Activated naive CD4-positive, alpha-beta T cell treated with anti-CD3 and anti-CD28 coated beads for 36 hours (primary cell): ENCODE measurements at regions of chr5 and their contacts with region 1.

Region 1: DNA sequence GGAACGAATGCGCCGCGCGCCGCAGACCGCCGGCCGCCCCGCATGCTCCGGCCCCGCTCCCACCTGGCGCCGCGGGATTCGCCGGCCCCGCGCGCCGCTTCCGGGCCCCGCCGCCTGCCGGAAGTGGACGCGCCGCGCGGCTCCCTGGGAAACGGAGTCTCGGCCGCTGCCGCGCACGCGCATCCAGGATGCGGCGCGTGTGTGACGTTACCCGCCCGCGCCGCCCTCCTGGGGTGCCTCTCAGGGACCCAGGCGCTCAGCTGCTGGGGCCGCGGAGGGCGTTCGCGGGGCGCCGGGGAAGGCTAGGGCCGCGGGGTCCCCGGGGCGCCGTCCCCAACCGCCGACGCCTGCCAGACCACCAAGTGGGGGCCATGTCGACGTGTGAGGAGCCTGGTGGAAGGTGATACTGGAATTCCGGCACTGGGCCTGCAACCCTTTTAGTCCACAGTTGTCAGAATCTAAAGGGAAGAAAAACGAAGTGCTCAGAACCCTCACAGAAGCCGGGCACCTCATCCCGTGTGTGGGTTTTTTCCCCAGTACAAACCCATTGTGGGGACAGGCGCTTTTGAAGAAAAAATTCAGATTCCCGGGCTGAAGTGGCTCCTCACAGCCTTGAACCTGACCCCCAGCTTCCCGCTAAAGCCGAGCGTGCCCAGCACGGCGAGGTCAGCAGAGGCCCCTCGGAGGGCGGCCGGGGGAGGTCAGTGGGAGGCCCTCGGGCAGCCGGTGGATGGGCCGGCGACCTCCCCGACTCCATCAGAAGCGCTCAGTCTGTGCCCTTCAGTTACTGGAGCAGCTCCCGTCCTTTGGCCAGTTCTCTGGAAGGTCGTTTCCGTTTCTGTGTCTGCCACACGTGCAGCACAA is at the start of gene CLPTM1L:
- DNase-seq: peak; percentile 87
- H3K4me3 Mint-ChIP-seq: peak within 1 kb of the TSS; percentile 79
- H3K27ac Mint-ChIP-seq: peak within 1 kb of the TSS; percentile 70
- H3K4me1 Mint-ChIP-seq: peaks cover 31% of the 10 kb centered on the region
- H3K27me3 Mint-ChIP-seq: no peaks in the 10 kb centered on the region
- total RNA-seq, gene CLPTM1L: 48.0 to 48.5 TPM

Region 2: GRCh38 chr5:1167728-1168709 is 177.2 kb before region 1 on chr5:
- CTCF ChIA-PET with region 1: interaction called, 3 read pairs
- intact Hi-C with region 1: loop called (anchors 1 kb)
- DNase-seq: peak; percentile 75
- H3K4me3 Mint-ChIP-seq: peak overlapping the region; percentile 37
- H3K27ac Mint-ChIP-seq: no peak overlapping the region
- H3K4me1 Mint-ChIP-seq: peaks cover 4% of the 10 kb centered on the region
- H3K27me3 Mint-ChIP-seq: peaks cover 8% of the 10 kb centered on the region

Region 3: GRCh38 chr5:1255081-1255561 is 90.1 kb before region 1 on chr5:
- CTCF ChIA-PET with region 1: no interaction called
- intact Hi-C with region 1: loop called (anchors 1 kb)
- DNase-seq: peak; percentile 57
- H3K4me3 Mint-ChIP-seq: peak overlapping the region; percentile 0
- H3K27ac Mint-ChIP-seq: peak overlapping the region; percentile 32
- H3K4me1 Mint-ChIP-seq: peaks cover 22% of the 10 kb centered on the region
- H3K27me3 Mint-ChIP-seq: no peaks in the 10 kb centered on the region

Region 4: DNA sequence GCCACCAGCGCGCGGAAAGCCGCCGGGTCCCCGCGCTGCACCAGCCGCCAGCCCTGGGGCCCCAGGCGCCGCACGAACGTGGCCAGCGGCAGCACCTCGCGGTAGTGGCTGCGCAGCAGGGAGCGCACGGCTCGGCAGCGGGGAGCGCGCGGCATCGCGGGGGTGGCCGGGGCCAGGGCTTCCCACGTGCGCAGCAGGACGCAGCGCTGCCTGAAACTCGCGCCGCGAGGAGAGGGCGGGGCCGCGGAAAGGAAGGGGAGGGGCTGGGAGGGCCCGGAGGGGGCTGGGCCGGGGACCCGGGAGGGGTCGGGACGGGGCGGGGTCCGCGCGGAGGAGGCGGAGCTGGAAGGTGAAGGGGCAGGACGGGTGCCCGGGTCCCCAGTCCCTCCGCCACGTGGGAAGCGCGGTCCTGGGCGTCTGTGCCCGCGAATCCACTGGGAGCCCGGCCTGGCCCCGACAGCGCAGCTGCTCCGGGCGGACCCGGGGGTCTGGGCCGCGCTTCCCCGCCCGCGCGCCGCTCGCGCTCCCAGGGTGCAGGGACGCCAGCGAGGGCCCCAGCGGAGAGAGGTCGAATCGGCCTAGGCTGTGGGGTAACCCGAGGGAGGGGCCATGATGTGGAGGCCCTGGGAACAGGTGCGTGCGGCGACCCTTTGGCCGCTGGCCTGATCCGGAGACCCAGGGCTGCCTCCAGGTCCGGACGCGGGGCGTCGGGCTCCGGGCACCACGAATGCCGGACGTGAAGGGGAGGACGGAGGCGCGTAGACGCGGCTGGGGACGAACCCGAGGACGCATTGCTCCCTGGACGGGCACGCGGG is 50.2 kb before region 1 on chr5 and contains the start of gene TERT:
- CTCF ChIA-PET with region 1: no interaction called
- intact Hi-C with region 1: loop called (anchors 1 kb)
- DNase-seq: peak; percentile 81
- H3K4me3 Mint-ChIP-seq: peak within 1 kb of the TSS; percentile 58
- H3K27ac Mint-ChIP-seq: no peak within 1 kb of the TSS
- H3K4me1 Mint-ChIP-seq: peaks cover 18% of the 10 kb centered on the region
- H3K27me3 Mint-ChIP-seq: no peaks in the 10 kb centered on the region
- total RNA-seq, gene TERT: 10.1 to 13.1 TPM

Region 5: DNA sequence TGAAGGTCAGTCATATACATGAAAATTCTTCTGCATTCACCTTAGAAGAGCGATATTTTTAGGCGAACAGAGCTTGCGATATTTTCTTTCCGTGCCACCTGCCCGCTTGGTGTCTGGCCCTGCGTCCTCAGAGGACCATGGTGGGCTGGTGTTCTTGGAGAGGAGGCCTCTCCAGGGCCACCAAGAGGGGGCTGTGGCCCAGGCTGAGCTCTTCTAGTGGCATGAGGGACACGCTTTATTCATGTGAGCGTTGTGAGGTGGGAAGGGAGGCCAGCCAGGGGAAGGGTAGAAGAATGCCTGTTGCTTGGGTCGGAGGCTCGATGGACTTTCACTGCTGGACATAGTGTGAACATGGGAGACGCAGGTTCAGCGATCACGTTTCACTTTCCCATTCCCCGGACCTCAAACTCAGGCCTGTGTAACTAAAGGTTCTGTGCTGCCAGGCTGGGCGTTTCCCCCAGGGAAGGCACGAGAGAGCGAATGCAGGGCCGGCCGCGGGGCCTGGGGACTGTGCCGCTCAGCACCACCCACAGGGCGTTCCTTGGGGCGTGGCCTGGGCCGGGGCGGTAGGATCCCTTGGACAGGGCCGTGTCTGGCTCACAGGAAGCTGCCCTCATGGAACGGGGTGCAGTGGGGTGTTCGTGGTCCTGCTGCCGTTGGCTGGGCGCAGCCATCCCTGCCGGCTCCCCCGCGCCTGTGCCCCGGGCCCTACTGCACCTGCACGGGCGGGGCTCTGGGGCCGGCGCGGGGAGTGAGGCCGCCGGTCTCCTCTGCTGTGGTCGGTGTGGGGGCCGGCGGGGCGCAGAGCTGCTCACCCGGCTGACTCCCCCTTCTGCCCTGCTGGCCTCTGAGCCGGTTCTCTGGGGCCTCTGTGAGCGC is 40.4 kb after region 1 on chr5:
- CTCF ChIA-PET with region 1: interaction called, 4 read pairs
- intact Hi-C with region 1: loop called (anchors 1 kb)
- DNase-seq: peak; percentile 85
- H3K4me3 Mint-ChIP-seq: peak overlapping the region; percentile 90
- H3K27ac Mint-ChIP-seq: peak overlapping the region; percentile 89
- H3K4me1 Mint-ChIP-seq: peaks cover 15% of the 10 kb centered on the region
- H3K27me3 Mint-ChIP-seq: no peaks in the 10 kb centered on the region

Region 6: GRCh38 chr5:1523771-1524480 is 178.7 kb after region 1 on chr5 and contains the start of gene LPCAT1:
- CTCF ChIA-PET with region 1: no interaction called
- intact Hi-C with region 1: loop called (anchors 1 kb)
- DNase-seq: peak; percentile 68
- H3K4me3 Mint-ChIP-seq: peak within 1 kb of the TSS; percentile 87
- H3K27ac Mint-ChIP-seq: peak within 1 kb of the TSS; percentile 4
- H3K4me1 Mint-ChIP-seq: peaks cover 22% of the 10 kb centered on the region
- H3K27me3 Mint-ChIP-seq: no peaks in the 10 kb centered on the region
- total RNA-seq, gene LPCAT1: 31.2 to 34.1 TPM